GM12878 (cell line): ENCODE measurements at regions of chr10 and their contacts with region 1.

Region 1: GRCh38 chr10:84166620-84167288 is 6.8 kb upstream of the GPR15LG start:
- DNase-seq: no peak
- ATAC-seq: peak; percentile 71
- H3K4me3 ChIP-seq: peak overlapping the region; percentile 81
- H3K27ac ChIP-seq: peak overlapping the region; percentile 54; the same call in 1 of the 2 replicates
- H3K4me1 ChIP-seq: peaks cover 24% of the 10 kb centered on the region
- H3K27me3 ChIP-seq: no peaks in the 10 kb centered on the region
- CTCF ChIP-seq: no peak
- EP300 ChIP-seq: no peak
- POLR2A ChIP-seq: peak; percentile 26; the same call in 1 of the 2 replicates
- RAD21 ChIP-seq: no peak

Region 2: DNA sequence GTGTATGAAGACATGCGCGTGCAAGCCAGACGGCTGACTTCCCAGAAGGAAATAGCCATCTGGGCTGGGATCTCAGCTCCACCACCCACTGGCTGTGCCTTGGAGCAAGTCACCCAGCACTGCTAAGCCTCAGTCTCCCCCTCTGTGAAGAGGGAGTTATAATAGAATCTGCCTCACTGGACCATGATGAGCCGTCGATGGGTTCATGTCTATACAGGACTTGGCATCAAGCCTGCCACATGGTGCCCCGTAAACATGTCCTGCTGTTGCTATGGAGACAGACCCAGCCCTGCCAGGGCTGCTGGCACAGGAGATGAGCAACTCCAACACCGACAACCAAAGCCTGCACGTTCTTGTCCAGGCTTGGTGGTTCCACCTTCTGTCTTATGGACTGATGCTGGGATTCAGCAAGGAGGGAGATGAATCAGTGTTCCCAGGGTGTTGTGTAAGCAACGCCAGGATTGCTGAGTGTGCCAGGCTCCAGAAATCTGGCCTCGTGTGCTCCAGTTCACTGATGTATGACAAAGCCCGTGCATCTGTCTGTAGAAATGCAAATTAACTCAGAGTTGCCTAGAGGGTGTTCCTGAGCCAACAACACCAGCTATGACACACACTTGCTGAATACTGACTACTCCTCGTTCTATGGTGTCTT is 12.4 kb after region 1 on chr10:
- CTCF ChIA-PET with region 1: interaction called, 7 read pairs
- POLR2A ChIA-PET with region 1: interaction called, 10 read pairs
- RAD21 ChIA-PET with region 1: interaction called, 3 read pairs
- SMC1A ChIA-PET with region 1: interaction called, 18 read pairs
- in situ Hi-C with region 1: no loop called
- intact Hi-C with region 1: no loop called
- DNase-seq: no peak
- ATAC-seq: peak; percentile 90
- H3K4me3 ChIP-seq: no peak overlapping the region
- H3K27ac ChIP-seq: no peak overlapping the region
- H3K4me1 ChIP-seq: peaks cover 26% of the 10 kb centered on the region
- H3K27me3 ChIP-seq: no peaks in the 10 kb centered on the region
- CTCF ChIP-seq: no peak
- EP300 ChIP-seq: no peak
- POLR2A ChIP-seq: no peak
- RAD21 ChIP-seq: no peak